Naive thymus-derived CD4-positive, alpha-beta T cell (primary cell): ENCODE measurements at regions of chr4 and their contacts with region 1.

Region 1: GRCh38 chr4:79958466-79959264 is 114.4 kb downstream of the ANTXR2 start:
- DNase-seq: no peak
- ATAC-seq: no peak
- H3K4me3 ChIP-seq: no peak overlapping the region
- H3K4me3 Mint-ChIP-seq: no peak overlapping the region
- H3K27ac ChIP-seq: no peak overlapping the region
- H3K27ac Mint-ChIP-seq: no peak overlapping the region
- H3K4me1 ChIP-seq: no peaks in the 10 kb centered on the region
- H3K4me1 Mint-ChIP-seq: no peaks in the 10 kb centered on the region
- H3K27me3 ChIP-seq: no peaks in the 10 kb centered on the region
- H3K27me3 Mint-ChIP-seq: no peaks in the 10 kb centered on the region

Region 2: DNA sequence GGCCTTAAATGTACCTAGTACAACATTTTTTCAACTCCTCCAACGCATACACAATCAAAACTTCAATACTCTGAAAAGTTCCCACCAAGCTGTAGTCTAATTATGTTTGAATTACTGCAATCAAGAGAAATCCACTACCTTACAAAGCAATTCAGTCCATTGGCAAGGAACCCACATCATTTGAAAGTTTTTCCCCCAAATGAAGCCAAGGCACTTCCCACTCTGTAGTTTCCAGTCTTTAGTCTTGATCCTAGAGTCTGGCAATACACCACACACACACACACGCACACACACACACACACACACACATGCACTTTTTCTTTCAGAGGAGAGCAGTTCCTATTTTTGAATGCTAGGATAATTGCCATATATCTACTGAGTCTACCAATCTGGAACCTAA is 34.8 kb after region 1 on chr4:
- CTCF ChIA-PET with region 1: no interaction called
- POLR2A ChIA-PET with region 1: interaction called, 4 read pairs
- intact Hi-C with region 1: loop called in 1 of 2 experiments (anchors 5 kb)
- DNase-seq: no peak
- ATAC-seq: no peak
- H3K4me3 ChIP-seq: no peak overlapping the region
- H3K4me3 Mint-ChIP-seq: peak overlapping the region in 1 of 10 donors; percentile 13
- H3K27ac ChIP-seq: no peak overlapping the region
- H3K27ac Mint-ChIP-seq: peak overlapping the region in 1 of 9 donors; percentile 10
- H3K4me1 ChIP-seq: no peaks in the 10 kb centered on the region
- H3K4me1 Mint-ChIP-seq: peaks cover 16 to 77% (median 62%) of the 10 kb centered on the region in 7 donors
- H3K27me3 ChIP-seq: no peaks in the 10 kb centered on the region
- H3K27me3 Mint-ChIP-seq: no peaks in the 10 kb centered on the region